ENCODE measurements at regions of chr6 and their contacts with region 1.

Region 1: GRCh38 chr6:57316581-57317059 is 810 bp upstream of the PRIM2 start:
- DNase-seq: peak; percentile 94
- H3K4me3 ChIP-seq: peak overlapping the region; percentile 25 to 92 (median 53)
- H3K27ac ChIP-seq: peak overlapping the region; percentile 44
- H3K4me1 ChIP-seq: peaks cover 34% of the 10 kb centered on the region
- H3K27me3 ChIP-seq: no peaks in the 10 kb centered on the region
- CTCF ChIP-seq: peak; percentile 64 to 79
- POLR2A ChIP-seq: no peak

Region 2: DNA sequence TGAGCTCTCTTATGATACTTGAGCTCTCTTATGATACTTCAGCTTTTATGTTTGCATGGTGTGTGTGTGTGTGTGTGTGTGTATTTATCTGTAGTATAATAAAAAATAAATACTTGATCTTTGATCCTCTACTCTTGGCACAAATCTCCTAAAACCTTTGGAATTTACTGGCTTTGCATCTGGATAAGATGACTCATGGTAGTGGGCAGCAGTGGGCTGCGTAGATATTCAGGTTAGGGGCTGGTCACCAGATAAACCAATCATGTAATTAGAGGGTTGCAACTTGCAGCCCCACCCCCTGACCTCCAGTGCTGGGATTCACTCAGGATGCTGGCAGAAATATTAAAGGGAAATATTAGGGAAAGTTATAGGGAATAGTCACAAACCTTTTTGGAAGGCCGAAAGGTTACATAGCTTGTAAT is 917.4 kb before region 1 on chr6:
- CTCF ChIA-PET with region 1: no interaction called
- POLR2A ChIA-PET with region 1: no interaction called
- dilution Hi-C with region 1: no loop called
- intact Hi-C with region 1: no loop called
- DNase-seq: no peak
- H3K4me3 ChIP-seq: no peak overlapping the region
- H3K27ac ChIP-seq: no peak overlapping the region
- H3K4me1 ChIP-seq: no peaks in the 10 kb centered on the region
- H3K27me3 ChIP-seq: no peaks in the 10 kb centered on the region
- CTCF ChIP-seq: no peak
- POLR2A ChIP-seq: no peak

Region 3: GRCh38 chr6:56618050-56618449 is 698.6 kb before region 1 on chr6:
- CTCF ChIA-PET with region 1: no interaction called
- POLR2A ChIA-PET with region 1: no interaction called
- dilution Hi-C with region 1: loop called (anchors 25 kb)
- intact Hi-C with region 1: no loop called
- DNase-seq: no peak
- H3K4me3 ChIP-seq: no peak overlapping the region
- H3K27ac ChIP-seq: no peak overlapping the region
- H3K4me1 ChIP-seq: no peaks in the 10 kb centered on the region
- H3K27me3 ChIP-seq: no peaks in the 10 kb centered on the region
- CTCF ChIP-seq: peak in 1 of 2 donors; percentile 20
- POLR2A ChIP-seq: no peak

Region 4: GRCh38 chr6:56708810-56709597 is 607.6 kb before region 1 on chr6:
- CTCF ChIA-PET with region 1: no interaction called
- POLR2A ChIA-PET with region 1: no interaction called
- dilution Hi-C with region 1: no loop called
- intact Hi-C with region 1: loop called (anchors 5 kb)
- DNase-seq: peak; percentile 73
- H3K4me3 ChIP-seq: peak overlapping the region in 1 of 3 experiments; percentile 15
- H3K27ac ChIP-seq: peak overlapping the region; percentile 69
- H3K4me1 ChIP-seq: peaks cover 30% of the 10 kb centered on the region
- H3K27me3 ChIP-seq: no peaks in the 10 kb centered on the region
- CTCF ChIP-seq: peak; percentile 30 to 40
- POLR2A ChIP-seq: no peak

Region 5: DNA sequence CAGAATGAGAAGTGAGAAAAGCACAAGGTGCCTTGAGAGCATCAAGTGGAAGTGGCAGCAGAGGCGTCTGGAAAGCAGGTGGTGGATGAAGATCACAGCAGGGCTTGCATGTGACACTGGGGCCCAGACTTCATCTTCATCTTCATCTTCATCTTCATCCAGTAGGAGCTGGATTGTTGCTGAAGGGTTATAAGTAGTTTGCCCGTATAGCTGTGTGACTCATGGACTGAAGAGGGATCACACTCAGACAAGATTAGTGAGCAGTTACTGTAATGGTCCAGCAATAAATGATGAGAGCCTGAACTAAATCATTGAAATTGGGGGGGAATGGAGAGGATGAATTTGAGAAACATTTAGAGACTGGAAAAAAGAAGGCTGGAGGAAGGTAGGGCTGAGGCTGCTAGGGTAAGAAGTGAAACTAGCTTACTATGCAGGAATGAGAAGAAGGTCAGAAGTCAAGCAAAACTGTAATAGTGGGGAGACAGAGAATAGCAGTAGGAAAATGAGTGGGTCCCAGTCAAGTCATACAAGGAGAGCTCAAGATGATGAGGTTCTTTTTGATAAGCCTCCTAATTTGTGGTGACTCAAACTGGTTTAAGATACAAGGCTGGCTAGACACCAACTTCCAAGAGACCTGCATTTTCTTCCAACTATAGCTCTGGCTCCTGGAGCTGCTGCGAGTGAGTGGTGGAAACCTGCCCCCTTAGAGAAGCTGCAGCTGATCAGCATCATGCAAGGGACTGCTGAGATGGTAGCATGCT is 454.0 kb before region 1 on chr6:
- CTCF ChIA-PET with region 1: no interaction called
- POLR2A ChIA-PET with region 1: no interaction called
- dilution Hi-C with region 1: no loop called
- intact Hi-C with region 1: no loop called
- DNase-seq: peak; percentile 31
- H3K4me3 ChIP-seq: no peak overlapping the region
- H3K27ac ChIP-seq: no peak overlapping the region
- H3K4me1 ChIP-seq: peaks cover 57% of the 10 kb centered on the region
- H3K27me3 ChIP-seq: no peaks in the 10 kb centered on the region
- CTCF ChIP-seq: no peak
- POLR2A ChIP-seq: no peak

Region 6: GRCh38 chr6:57021086-57021720 is 295.4 kb before region 1 on chr6:
- CTCF ChIA-PET with region 1: interaction called, 4 read pairs
- POLR2A ChIA-PET with region 1: no interaction called
- dilution Hi-C with region 1: no loop called
- intact Hi-C with region 1: loop called (anchors 1 kb)
- DNase-seq: peak; percentile 54
- H3K4me3 ChIP-seq: no peak overlapping the region
- H3K27ac ChIP-seq: no peak overlapping the region
- H3K4me1 ChIP-seq: peaks cover 4% of the 10 kb centered on the region
- H3K27me3 ChIP-seq: no peaks in the 10 kb centered on the region
- CTCF ChIP-seq: peak; percentile 21 to 39
- POLR2A ChIP-seq: no peak

Region 7: GRCh38 chr6:57172136-57173055 is 144.2 kb before region 1 on chr6 and contains the start of gene BAG2:
- CTCF ChIA-PET with region 1: interaction called, 5 read pairs
- POLR2A ChIA-PET with region 1: interaction called, 3 read pairs
- dilution Hi-C with region 1: no loop called
- intact Hi-C with region 1: loop called (anchors 1 kb)
- DNase-seq: peak; percentile 80
- H3K4me3 ChIP-seq: peak within 1 kb of the TSS; percentile 71 to 79 (median 72)
- H3K27ac ChIP-seq: peak within 1 kb of the TSS; percentile 32
- H3K4me1 ChIP-seq: peaks cover 11% of the 10 kb centered on the region
- H3K27me3 ChIP-seq: no peaks in the 10 kb centered on the region
- CTCF ChIP-seq: peak in 1 of 2 donors; percentile 32
- POLR2A ChIP-seq: peak; percentile 28
- total RNA-seq, gene BAG2: 3.6 and 3.9 TPM in 2 replicates

Region 8: DNA sequence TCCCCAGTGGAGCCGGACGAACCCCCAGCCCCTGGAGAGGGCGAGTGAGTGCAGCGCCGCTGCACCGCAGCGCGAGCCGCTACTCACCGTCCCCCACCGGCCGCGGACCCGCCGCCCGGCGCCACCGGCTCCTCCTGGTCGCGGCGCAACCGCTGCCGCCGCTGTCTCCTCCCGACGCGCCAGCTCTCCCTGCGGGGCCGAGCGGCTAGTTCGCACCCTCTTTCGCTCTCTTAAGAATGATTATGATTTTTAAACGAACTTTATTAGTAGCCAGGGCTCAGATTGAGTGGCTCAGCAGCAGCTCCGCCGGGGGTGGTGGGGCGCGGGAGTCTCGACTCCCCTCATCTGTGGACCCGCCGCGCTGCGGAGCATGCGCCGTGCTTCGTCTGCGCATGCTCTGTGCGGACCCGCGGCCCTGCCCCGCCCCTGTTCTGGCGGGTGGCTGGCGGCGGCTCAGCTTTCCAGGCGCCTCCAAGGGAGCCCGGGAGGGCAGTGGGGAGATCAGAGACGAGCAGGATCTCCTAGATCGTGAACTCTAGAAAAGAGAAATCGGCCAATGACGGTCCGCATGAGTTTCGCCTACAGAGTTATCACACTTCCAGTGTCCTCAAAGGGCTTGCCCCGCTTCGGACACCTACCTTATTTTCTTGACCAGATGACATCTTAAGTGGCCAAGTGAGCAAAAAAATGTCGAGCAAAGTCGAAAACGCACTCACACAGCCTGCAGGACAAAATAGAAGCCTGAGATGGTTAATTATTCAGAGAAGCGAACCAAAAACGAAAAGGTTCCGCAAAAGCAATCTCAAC is 94.5 kb before region 1 on chr6 and contains the start of gene RAB23:
- CTCF ChIA-PET with region 1: interaction called, 12 read pairs
- POLR2A ChIA-PET with region 1: no interaction called
- dilution Hi-C with region 1: no loop called
- intact Hi-C with region 1: loop called (anchors 1 kb)
- DNase-seq: peak; percentile 91
- H3K4me3 ChIP-seq: peak within 1 kb of the TSS; percentile 75 to 96 (median 90)
- H3K27ac ChIP-seq: peak within 1 kb of the TSS; percentile 33
- H3K4me1 ChIP-seq: peaks cover 11% of the 10 kb centered on the region
- H3K27me3 ChIP-seq: no peaks in the 10 kb centered on the region
- CTCF ChIP-seq: no peak
- POLR2A ChIP-seq: peak; percentile 84
- total RNA-seq, gene RAB23: 8.8 and 9.4 TPM in 2 replicates

Region 9: DNA sequence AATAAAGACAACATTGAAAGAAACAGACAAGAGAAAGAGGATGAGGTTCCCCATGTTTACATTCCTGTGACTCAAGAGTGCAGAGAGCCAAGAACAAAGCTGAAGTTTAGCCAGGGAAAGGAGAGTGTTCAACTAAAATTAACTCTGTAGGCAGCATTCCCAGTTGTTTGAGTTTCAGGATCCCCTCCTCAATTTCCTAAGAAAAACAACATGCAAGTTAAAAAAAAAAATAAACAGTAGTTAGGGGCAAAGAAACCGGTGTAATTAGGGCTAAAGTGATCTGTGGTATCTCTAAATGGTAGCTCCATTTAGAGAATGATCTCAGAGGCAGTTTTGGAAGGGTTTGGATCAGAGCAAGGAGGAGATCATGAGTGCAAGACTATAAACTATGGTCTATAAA is 63.6 kb before region 1 on chr6:
- CTCF ChIA-PET with region 1: no interaction called
- POLR2A ChIA-PET with region 1: no interaction called
- dilution Hi-C with region 1: no loop called
- intact Hi-C with region 1: no loop called
- DNase-seq: no peak
- H3K4me3 ChIP-seq: no peak overlapping the region
- H3K27ac ChIP-seq: no peak overlapping the region
- H3K4me1 ChIP-seq: no peaks in the 10 kb centered on the region
- H3K27me3 ChIP-seq: peaks cover 0 to under 1% of the 10 kb centered on the region in 2 experiments
- CTCF ChIP-seq: no peak
- POLR2A ChIP-seq: no peak

Measured in endothelial cell of umbilical vein (primary cell).